Aorta (tissue), 5 donors: ENCODE measurements at regions of chr12 and their contacts with region 1.

Region 1: GRCh38 chr12:85866986-85867776 is 6.9 kb upstream of the NTS start:
- DNase-seq: no peak
- ATAC-seq: peak; percentile 85
- H3K4me3 ChIP-seq: peak overlapping the region in 1 of 2 donors; percentile 24
- H3K27ac ChIP-seq: no peak overlapping the region
- H3K4me1 ChIP-seq: no peaks in the 10 kb centered on the region
- H3K27me3 ChIP-seq: no peaks in the 10 kb centered on the region

Region 2: GRCh38 chr12:85468356-85469157 is 398.6 kb before region 1 on chr12:
- intact Hi-C with region 1: loop called (anchors 5 kb)
- DNase-seq: no peak
- ATAC-seq: peak; percentile 76
- H3K4me3 ChIP-seq: peak overlapping the region; percentile 10 to 41
- H3K27ac ChIP-seq: no peak overlapping the region
- H3K4me1 ChIP-seq: no peaks in the 10 kb centered on the region
- H3K27me3 ChIP-seq: no peaks in the 10 kb centered on the region

Region 3: DNA sequence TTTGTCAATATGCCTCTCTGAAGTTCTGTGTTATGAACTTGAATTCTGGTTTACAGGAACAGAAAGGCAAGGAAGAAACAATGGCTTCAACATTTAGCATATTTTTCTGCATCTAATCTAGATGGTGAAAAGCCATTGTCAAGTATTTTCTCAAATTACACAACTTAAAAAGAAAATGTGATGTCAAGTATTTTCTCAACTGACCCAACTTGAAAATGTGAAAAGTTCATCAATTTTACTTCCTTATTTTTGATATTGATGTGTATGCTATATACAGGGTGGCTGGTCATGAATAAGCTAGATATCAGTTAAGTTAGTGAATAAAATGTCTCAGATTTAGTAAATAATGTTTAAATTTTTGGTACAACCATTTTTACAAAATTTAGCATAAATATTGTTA is 390.4 kb before region 1 on chr12:
- intact Hi-C with region 1: loop called (anchors 5 kb)
- DNase-seq: no peak
- ATAC-seq: no peak
- H3K4me3 ChIP-seq: no peak overlapping the region
- H3K27ac ChIP-seq: no peak overlapping the region
- H3K4me1 ChIP-seq: no peaks in the 10 kb centered on the region
- H3K27me3 ChIP-seq: no peaks in the 10 kb centered on the region

Region 4: GRCh38 chr12:85575120-85576096 is 291.8 kb before region 1 on chr12:
- intact Hi-C with region 1: loop called in 1 of 2 experiments (anchors 2 kb)
- DNase-seq: peak in 1 of 2 donors; percentile 39
- ATAC-seq: peak; percentile 74
- H3K4me3 ChIP-seq: no peak overlapping the region
- H3K27ac ChIP-seq: no peak overlapping the region
- H3K4me1 ChIP-seq: no peaks in the 10 kb centered on the region
- H3K27me3 ChIP-seq: no peaks in the 10 kb centered on the region